ENCODE measurements at regions of chr11 and their contacts with region 1.

Region 1: DNA sequence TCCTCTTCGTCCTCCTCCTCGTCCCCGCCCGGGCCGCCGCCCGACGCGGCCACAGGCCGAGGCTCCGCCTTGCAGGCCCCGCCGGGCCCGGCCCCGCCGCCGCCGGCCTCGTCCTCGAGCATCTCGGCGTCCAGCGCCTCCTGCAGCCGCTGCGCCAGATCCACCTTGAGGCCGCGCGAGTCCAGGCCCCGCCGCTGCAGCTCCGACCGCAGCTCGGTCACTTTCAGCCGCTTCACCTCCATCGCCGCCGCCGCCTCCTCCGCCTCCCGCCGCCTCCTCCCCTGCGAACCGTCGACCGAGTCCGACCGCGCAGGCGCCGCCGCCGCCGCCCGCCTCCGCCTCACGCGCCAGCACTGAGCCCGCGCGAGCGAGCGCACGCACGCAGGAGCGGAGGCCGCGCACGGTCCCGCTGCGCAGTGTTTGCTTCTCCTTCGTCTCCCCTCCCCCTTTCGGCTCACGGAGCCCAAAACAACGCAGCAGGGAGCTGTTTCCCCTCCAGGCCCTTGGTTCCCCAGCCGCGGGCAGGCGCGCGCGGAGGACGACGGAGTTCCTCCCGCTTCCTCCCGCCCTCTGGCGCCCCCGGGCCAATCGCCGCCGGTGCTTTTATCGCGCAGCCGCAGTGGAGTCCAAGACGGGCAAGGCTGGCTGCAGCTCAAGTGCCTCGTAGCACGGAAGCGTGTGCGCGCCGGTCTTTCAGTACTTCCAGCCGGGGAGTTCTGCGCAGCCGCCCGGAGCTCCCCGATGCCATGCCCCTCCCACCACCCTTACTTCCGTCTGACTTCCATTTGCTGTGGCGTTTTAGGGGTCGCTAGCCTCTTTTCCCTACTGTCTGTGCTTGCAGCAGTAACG is at the start of gene HNRNPUL2:
- DNase-seq: peak; percentile 99
- H3K4me3 Mint-ChIP-seq: peak within 1 kb of the TSS; percentile 99
- H3K27ac Mint-ChIP-seq: peak within 1 kb of the TSS; percentile 93
- H3K4me1 Mint-ChIP-seq: peaks cover 44% of the 10 kb centered on the region
- H3K27me3 Mint-ChIP-seq: no peaks in the 10 kb centered on the region
- total RNA-seq, gene HNRNPUL2: 56.0 to 62.3 TPM

Region 2: GRCh38 chr11:62652161-62653006 is 74.8 kb before region 1 on chr11:
- CTCF ChIA-PET with region 1: no interaction called
- POLR2A ChIA-PET with region 1: interaction called, 6 read pairs
- intact Hi-C with region 1: loop called (anchors 2 kb)
- DNase-seq: peak; percentile 59
- H3K4me3 Mint-ChIP-seq: peak overlapping the region; percentile 85
- H3K27ac Mint-ChIP-seq: peak overlapping the region; percentile 81
- H3K4me1 Mint-ChIP-seq: peaks cover 22% of the 10 kb centered on the region
- H3K27me3 Mint-ChIP-seq: no peaks in the 10 kb centered on the region

Region 3: GRCh38 chr11:62678770-62679696 is 48.1 kb before region 1 on chr11 and contains the start of gene UBXN1:
- CTCF ChIA-PET with region 1: no interaction called
- POLR2A ChIA-PET with region 1: interaction called, 10 read pairs
- intact Hi-C with region 1: no loop called
- DNase-seq: peak; percentile 94
- H3K4me3 Mint-ChIP-seq: peak within 1 kb of the TSS; percentile 86
- H3K27ac Mint-ChIP-seq: peak within 1 kb of the TSS; percentile 90
- H3K4me1 Mint-ChIP-seq: peaks cover 35% of the 10 kb centered on the region
- H3K27me3 Mint-ChIP-seq: no peaks in the 10 kb centered on the region
- total RNA-seq, gene UBXN1: 110 to 116 TPM

Region 4: GRCh38 chr11:62753736-62754603 is 26.8 kb after region 1 on chr11 and contains the start of gene ZBTB3:
- CTCF ChIA-PET with region 1: interaction called, 6 read pairs
- POLR2A ChIA-PET with region 1: interaction called, 14 read pairs
- intact Hi-C with region 1: loop called (anchors 1 kb)
- DNase-seq: peak; percentile 98
- H3K4me3 Mint-ChIP-seq: peak within 1 kb of the TSS; percentile 99
- H3K27ac Mint-ChIP-seq: peak within 1 kb of the TSS; percentile 99
- H3K4me1 Mint-ChIP-seq: peaks cover 23% of the 10 kb centered on the region
- H3K27me3 Mint-ChIP-seq: no peaks in the 10 kb centered on the region
- total RNA-seq, gene ZBTB3: 8.4 to 9.7 TPM

Region 5: DNA sequence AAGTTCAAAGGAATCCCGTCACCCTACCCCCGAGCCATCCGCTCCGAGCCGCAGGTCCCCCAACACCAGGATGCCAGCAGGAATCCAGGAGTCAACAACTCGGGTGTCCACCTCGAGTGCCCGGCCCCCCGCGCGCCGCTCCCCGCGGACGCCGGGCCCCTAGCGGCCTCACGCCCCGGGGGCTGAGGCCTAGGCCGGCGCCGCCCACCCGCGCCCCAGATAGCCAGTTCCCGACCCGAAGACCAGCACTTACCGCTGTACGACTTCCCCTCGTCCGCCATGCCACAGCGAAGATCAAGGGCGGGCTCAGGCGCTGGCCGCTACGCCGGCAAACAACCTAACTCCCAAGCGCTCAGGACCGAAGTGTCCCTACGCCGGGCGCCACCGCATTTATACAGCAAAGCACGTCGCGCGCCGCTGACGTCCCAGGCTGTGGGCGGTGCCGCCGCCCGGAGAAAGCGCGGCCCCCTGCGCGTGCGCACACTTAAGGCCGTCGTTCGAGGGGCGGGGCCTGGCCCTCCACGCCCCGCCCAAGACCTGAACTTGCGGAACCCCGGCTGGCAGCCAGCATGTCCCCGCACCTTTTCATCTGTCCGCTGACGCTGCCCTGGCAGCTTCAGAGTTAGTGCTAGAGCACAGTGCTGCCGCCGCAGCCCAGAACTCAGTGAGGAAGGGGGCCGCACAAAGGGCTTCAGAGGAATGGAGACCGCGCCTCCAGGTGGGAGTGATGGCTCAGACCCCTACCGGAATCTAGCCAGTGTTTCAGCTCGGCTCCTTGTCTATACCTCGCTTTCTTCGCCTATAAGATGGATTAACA is 78.1 kb after region 1 on chr11 and contains the start of gene NXF1:
- CTCF ChIA-PET with region 1: no interaction called
- POLR2A ChIA-PET with region 1: interaction called, 7 read pairs
- intact Hi-C with region 1: loop called (anchors 1 kb)
- DNase-seq: peak; percentile 96
- H3K4me3 Mint-ChIP-seq: peak within 1 kb of the TSS; percentile 99
- H3K27ac Mint-ChIP-seq: peak within 1 kb of the TSS; percentile 99
- H3K4me1 Mint-ChIP-seq: peaks cover 34% of the 10 kb centered on the region
- H3K27me3 Mint-ChIP-seq: no peaks in the 10 kb centered on the region
- total RNA-seq, gene NXF1: 70.8 to 83.6 TPM

Measured in activated CD4-positive, alpha-beta memory T cell treated with anti-CD3 and anti-CD28 coated beads for 36 hours (primary cell).